ENCODE measurements at regions of chr17 and their contacts with region 1.

Region 1: GRCh38 chr17:4733073-4733531 is 1.9 kb downstream of the MED11 start:
- DNase-seq: no peak
- H3K4me3 ChIP-seq: no peak overlapping the region
- H3K27ac ChIP-seq: peak overlapping the region in 20 of 59 donors; percentile 3 to 79 (median 42)
- H3K27me3 ChIP-seq: peaks cover 0 to 3% (median 0%) of the 10 kb centered on the region in 45 donors
- CTCF ChIP-seq: peak in 12 of 56 donors; percentile 10 to 28 (median 14)

Region 2: DNA sequence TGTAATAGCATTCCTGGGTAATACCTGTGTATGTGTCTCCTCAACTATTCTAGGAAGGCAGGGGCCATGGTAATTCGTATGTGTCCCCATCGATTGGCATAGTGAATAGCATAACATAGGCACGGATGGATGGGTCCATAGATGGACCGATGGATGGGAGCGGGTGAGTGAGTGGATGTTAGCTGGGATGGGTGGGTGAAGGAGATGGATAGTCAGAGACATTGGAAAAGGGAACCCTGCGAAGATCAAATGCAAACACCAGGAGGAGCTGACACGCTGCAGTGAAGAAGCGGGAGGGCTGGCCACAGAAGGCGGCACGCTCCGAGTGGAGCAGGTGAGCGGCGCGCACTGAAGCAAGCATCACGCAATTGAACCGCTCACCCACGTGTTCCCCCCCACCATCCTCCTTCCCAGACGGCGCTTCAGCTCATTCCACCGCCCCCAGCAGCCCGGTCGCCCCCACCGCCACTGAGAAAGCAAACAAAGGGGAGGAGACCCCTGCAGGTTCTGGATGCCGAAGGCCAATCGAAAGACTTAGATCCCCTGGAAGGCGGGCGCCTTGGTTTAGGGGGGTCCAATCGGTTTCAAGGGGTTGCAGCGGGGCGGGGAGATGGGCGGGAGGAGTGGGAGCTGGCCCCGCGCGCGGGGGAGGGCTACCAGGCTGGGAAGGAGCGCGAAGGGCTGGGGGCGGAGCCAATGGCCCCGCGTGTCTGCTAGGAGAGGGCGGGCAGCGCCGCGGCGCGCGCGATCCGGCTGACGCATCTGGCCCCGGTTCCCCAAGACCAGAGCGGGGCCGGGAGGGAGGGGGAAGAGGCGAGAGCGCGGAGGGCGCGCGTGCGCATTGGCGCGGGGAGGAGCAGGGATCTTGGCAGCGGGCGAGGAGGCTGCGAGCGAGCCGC is 23.1 kb before region 1 on chr17 and contains the start of gene ARRB2:
- intact Hi-C with region 1: loop called (anchors 1 to 2 kb)
- DNase-seq: peak; percentile 97 to 99 (median 99)
- H3K4me3 ChIP-seq: peak within 1 kb of the TSS; percentile 65 to 88 (median 80)
- H3K27ac ChIP-seq: peak within 1 kb of the TSS; percentile 7 to 95 (median 89)
- H3K27me3 ChIP-seq: no peaks in the 10 kb centered on the region
- CTCF ChIP-seq: peak in 54 of 56 donors; percentile 28 to 74 (median 54)
- total RNA-seq, gene ARRB2: 66.2 to 131 (median 94.9) TPM

Region 3: GRCh38 chr17:4789901-4790704 is 57.0 kb after region 1 on chr17:
- intact Hi-C with region 1: loop called (anchors 2 to 5 kb)
- DNase-seq: peak; percentile 62 to 91 (median 86)
- H3K4me3 ChIP-seq: peak overlapping the region; percentile 51 to 92 (median 80)
- H3K27ac ChIP-seq: peak overlapping the region; percentile 79 to 99 (median 98)
- H3K27me3 ChIP-seq: peaks cover 0 to 7% (median 0%) of the 10 kb centered on the region in 45 donors
- CTCF ChIP-seq: peak in 55 of 56 donors; percentile 40 to 97 (median 73)

Region 4: DNA sequence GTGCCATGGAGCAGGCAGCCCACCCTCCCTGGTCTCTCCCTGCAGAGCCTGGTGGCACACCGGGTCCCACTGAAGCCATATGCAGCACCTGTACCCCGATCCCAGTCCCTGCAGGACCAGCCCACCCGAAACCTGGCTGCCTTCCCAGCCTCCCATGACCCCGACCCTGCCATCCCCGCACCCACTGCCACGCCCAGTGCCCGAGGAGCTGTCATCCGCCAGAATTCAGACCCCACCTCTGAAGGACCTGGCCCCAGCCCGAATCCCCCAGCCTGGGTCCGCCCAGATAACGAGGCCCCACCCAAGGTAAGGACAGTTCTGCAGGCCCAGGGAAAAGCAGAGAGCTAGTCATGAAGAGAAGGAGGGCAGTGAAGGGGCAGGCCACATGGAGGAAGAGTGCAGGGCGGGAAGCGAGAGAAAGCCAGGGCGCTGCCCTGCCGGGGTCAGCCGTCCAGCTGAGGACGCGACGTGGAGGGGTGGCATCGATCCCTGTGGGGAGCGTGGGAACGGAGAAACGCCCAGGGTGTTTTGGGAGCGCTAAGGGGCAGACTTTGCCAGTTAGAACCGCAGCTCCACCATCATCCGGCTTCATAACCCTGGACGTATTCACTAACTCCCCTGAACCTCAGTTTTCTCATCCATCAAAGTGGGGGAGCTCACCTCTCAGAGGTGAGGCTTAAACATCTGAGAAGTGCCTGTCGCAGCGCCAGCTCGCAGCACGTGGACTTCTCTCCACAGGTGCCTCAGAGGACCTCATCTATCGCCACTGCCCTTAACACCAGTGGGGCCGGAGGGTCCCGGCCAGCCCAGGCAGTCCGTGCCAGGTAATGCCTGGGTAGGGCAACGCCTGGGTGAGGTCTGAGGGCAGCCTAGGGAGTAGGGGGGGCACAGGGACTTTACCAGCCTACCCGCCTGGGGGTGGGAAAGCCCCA is 158.6 kb after region 1 on chr17:
- intact Hi-C with region 1: loop called (anchors 1 to 5 kb)
- DNase-seq: no peak
- H3K4me3 ChIP-seq: no peak overlapping the region
- H3K27ac ChIP-seq: no peak overlapping the region
- H3K27me3 ChIP-seq: no peaks in the 10 kb centered on the region
- CTCF ChIP-seq: no peak

Region 5: GRCh38 chr17:4903051-4903818 is 170.1 kb after region 1 on chr17 and contains the start of gene CHRNE:
- intact Hi-C with region 1: loop called in 1 of 2 experiments (anchors 5 kb)
- DNase-seq: peak in 8 of 10 donors; percentile 60 to 90 (median 78)
- H3K4me3 ChIP-seq: peak within 1 kb of the TSS in 27 of 59 donors; percentile 1 to 64 (median 36)
- H3K27ac ChIP-seq: peak within 1 kb of the TSS in 57 of 59 donors; percentile 33 to 94 (median 77)
- H3K27me3 ChIP-seq: no peaks in the 10 kb centered on the region
- CTCF ChIP-seq: peak; percentile 65 to 89 (median 80)
- total RNA-seq, gene CHRNE: 0.34 to 4.3 (median 1.1) TPM in 119 of 120 experiments, not detected in the other

Region 6: GRCh38 chr17:4948931-4949320 is 215.8 kb after region 1 on chr17:
- intact Hi-C with region 1: loop called in 1 of 2 experiments (anchors 5 kb)
- DNase-seq: peak; percentile 51 to 87 (median 64)
- H3K4me3 ChIP-seq: peak overlapping the region; percentile 68 to 98 (median 91)
- H3K27ac ChIP-seq: peak overlapping the region; percentile 76 to 98 (median 96)
- H3K27me3 ChIP-seq: peaks cover 0 to 3% (median 0%) of the 10 kb centered on the region in 45 donors
- CTCF ChIP-seq: peak in 1 of 56 donors; percentile 4

Region 7: DNA sequence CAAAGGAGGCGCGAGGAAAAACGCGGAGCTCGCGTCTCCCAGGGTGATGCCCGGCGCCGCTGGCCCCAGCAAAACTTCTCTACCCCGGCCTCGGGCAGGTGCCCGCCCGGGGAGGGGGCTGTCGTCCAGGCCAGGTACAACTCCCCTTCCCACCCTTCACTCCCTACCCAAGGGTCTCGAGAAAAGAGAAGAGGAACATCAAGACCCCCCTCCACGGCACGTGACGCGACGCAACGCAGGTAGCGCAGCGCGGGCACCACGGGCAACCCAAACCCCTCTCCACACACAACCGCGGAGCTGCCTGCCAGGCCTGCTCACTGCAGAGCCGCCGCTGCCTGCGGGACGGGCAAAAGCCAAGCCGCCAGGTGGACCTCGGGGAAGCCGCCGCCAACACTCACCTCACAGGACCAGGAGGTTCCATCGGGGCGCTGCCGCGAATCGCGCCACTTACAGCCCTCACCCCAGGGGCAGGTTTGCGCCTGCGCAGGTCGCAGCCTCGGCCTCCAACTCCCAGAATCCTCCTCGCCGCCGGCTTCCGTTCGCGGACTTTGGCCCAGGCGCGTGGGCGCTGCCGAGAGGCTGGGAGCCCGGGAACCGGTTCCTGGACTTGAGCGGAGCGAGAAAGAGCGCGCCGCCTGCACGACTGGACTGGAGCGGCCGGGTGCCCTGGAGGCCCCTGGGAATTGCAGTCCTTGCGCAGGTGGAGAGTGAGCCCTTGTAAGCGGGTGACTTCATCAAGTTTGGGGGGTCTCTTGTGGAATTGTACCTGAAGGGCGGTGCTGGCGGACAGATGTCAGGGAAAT is 378.5 kb after region 1 on chr17 and contains the start of gene ZNF232:
- intact Hi-C with region 1: loop called in 1 of 2 experiments (anchors 5 kb)
- DNase-seq: peak; percentile 79 to 95 (median 90)
- H3K4me3 ChIP-seq: peak within 1 kb of the TSS; percentile 52 to 99 (median 93)
- H3K27ac ChIP-seq: peak within 1 kb of the TSS in 57 of 59 donors; percentile 2 to 92 (median 80)
- H3K27me3 ChIP-seq: peaks cover 0 to 26% (median 13%) of the 10 kb centered on the region in 45 donors
- CTCF ChIP-seq: peak in 48 of 56 donors; percentile 17 to 68 (median 44)
- total RNA-seq, gene ZNF232: 7.6 to 20.3 (median 10.9) TPM

Measured in dorsolateral prefrontal cortex (tissue), 120 donors.